Endothelial cell of umbilical vein (primary cell): ENCODE measurements at regions of chr9 and their contacts with region 1.

Region 1: DNA sequence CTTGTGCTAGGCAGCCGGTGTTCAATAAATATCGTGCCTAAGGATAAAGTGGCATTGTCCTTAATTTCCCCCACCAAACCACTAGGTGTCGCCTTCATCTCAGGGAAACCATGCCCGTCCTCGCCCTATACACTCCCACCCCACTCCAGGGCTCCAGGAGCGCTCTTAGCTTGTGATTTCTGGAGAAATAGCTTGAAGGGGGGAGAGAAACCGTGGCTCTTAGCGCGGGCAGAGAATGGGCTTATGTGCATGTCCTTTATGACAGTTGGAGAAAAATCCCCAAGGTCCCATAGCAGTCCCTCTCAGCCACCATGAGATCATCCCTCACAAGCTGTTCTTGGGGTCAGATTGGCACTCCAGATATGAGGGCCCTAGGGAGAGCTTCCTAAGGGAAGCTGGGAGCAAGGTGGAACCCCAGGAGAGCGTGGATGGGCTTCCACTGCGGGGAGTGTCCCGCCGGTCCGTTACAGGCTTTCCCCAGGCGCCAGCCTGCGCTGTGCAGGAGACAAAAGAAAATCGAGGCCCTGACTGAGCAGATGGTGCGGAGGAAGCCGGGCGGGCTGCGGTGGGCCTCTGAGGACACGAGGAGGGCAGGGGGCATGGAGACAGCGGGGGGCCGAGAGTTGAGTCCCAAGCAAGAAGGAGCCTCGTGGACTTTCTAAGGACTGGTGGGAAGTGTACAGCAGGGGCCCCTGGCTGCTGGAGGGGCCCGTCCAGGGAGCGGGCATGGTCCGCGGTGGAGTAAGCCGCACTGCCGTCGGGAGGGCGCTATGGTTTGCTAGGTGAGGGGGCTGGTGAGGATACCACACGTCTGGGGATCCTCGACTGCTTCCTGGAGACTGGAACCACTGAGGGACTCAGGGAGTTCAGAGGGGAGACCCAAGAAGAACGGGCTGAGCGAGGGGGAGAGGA is 750 bp upstream of the NPR2 start:
- DNase-seq: peak; percentile 78
- H3K4me3 ChIP-seq: peak overlapping the region in 1 of 3 experiments; percentile 11
- H3K27ac ChIP-seq: no peak overlapping the region
- H3K4me1 ChIP-seq: peaks cover 28% of the 10 kb centered on the region
- H3K27me3 ChIP-seq: no peaks in the 10 kb centered on the region
- CTCF ChIP-seq: peak; percentile 76 to 84
- POLR2A ChIP-seq: no peak

Region 2: DNA sequence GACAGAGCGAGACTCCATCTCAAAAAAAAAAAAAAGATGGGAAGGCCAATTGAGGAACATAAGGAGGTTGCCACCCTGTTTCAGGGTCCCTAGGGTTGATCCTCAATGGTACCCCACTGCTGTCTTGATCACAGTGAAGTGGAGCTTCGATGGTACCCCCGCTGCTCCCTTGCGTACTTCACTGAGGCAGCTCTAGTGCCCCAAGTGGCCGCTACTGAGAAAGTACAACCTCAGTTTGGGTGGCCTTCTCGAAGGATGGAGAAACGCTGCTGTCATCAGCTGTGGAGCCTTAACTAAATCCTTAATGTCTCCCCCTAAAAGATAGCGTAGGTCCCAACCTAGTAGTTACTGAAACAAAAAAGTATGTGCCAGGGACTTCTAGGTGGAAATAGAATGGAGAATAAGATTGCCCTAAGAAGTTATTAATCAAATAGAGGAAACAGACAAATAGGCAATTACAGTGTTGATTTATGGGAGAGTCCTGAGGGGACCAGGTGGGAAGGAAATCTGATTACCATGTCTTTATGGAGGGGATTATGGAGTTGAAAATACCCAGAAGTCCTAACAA is 179.3 kb before region 1 on chr9:
- CTCF ChIA-PET with region 1: no interaction called
- POLR2A ChIA-PET with region 1: no interaction called
- dilution Hi-C with region 1: no loop called
- intact Hi-C with region 1: no loop called
- DNase-seq: peak; percentile 37
- H3K4me3 ChIP-seq: no peak overlapping the region
- H3K27ac ChIP-seq: no peak overlapping the region
- H3K4me1 ChIP-seq: no peaks in the 10 kb centered on the region
- H3K27me3 ChIP-seq: peaks cover 17 to 21% of the 10 kb centered on the region in 2 experiments
- CTCF ChIP-seq: peak; percentile 67 to 80
- POLR2A ChIP-seq: no peak

Region 3: GRCh38 chr9:35738186-35738585 is 52.5 kb before region 1 on chr9:
- CTCF ChIA-PET with region 1: interaction called, 102 read pairs
- POLR2A ChIA-PET with region 1: interaction called, 3 read pairs
- dilution Hi-C with region 1: no loop called
- intact Hi-C with region 1: loop called (anchors 1 kb)
- DNase-seq: no peak
- H3K4me3 ChIP-seq: no peak overlapping the region
- H3K27ac ChIP-seq: no peak overlapping the region
- H3K4me1 ChIP-seq: peaks cover 12% of the 10 kb centered on the region
- H3K27me3 ChIP-seq: no peaks in the 10 kb centered on the region
- CTCF ChIP-seq: no peak
- POLR2A ChIP-seq: no peak

Region 4: GRCh38 chr9:35774907-35775635 is 15.6 kb before region 1 on chr9:
- CTCF ChIA-PET with region 1: interaction called, 25 read pairs
- POLR2A ChIA-PET with region 1: no interaction called
- dilution Hi-C with region 1: no loop called
- intact Hi-C with region 1: no loop called
- DNase-seq: peak; percentile 79
- H3K4me3 ChIP-seq: peak overlapping the region in 1 of 3 experiments; percentile 13
- H3K27ac ChIP-seq: peak overlapping the region; percentile 52
- H3K4me1 ChIP-seq: peaks cover 36% of the 10 kb centered on the region
- H3K27me3 ChIP-seq: no peaks in the 10 kb centered on the region
- CTCF ChIP-seq: no peak
- POLR2A ChIP-seq: no peak

Region 5: GRCh38 chr9:35829084-35829763 is 38.6 kb after region 1 on chr9 and contains the start of gene TMEM8B:
- CTCF ChIA-PET with region 1: interaction called, 277 read pairs
- POLR2A ChIA-PET with region 1: interaction called, 5 read pairs
- dilution Hi-C with region 1: no loop called
- intact Hi-C with region 1: loop called (anchors 1 kb)
- DNase-seq: peak; percentile 91
- H3K4me3 ChIP-seq: peak within 1 kb of the TSS; percentile 54 to 60 (median 60)
- H3K27ac ChIP-seq: peak within 1 kb of the TSS; percentile 34
- H3K4me1 ChIP-seq: peaks cover 9% of the 10 kb centered on the region
- H3K27me3 ChIP-seq: no peaks in the 10 kb centered on the region
- CTCF ChIP-seq: no peak
- POLR2A ChIP-seq: peak; percentile 57
- total RNA-seq, gene TMEM8B: 2.5 and 2.9 TPM in 2 replicates

Region 6: GRCh38 chr9:35882263-35882848 is 91.7 kb after region 1 on chr9:
- CTCF ChIA-PET with region 1: interaction called, 209 read pairs
- POLR2A ChIA-PET with region 1: interaction called, 3 read pairs
- dilution Hi-C with region 1: no loop called
- intact Hi-C with region 1: loop called (anchors 1 kb)
- DNase-seq: peak; percentile 75
- H3K4me3 ChIP-seq: no peak overlapping the region
- H3K27ac ChIP-seq: no peak overlapping the region
- H3K4me1 ChIP-seq: peaks cover 5% of the 10 kb centered on the region
- H3K27me3 ChIP-seq: peaks cover 4 to 17% of the 10 kb centered on the region in 2 experiments
- CTCF ChIP-seq: peak; percentile 91 to 96
- POLR2A ChIP-seq: no peak

Region 7: DNA sequence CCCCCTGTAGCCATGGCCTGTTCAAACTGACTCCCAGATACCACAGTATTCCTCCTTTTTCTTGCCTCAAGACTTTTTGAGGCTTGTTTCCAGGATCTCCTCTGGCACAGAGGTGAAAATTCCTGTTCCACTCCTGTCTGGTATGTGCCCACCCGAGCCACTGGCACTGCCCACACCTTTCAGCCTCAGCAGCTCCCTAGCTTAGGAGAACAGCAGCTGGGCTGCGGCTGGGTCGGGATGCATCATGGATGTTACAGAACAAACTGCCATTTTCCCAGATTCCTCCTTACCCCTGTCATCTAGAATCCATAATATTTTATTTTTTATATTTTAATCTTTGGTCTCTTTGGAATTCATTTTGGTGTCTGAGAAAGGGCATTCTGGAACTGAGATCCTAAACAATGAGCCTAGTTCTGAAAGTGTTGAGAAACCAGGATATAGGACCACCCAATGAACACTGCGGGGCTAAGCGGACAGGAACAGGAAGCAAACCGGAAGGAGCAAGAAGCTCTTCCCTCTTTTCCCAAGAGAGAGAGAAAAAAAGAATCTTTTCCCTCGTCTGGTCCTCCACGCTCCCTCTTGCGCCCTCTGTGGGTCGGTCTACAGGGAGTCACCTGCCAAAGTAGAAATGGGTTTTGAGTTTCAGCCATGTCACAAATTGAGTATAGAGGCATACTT is 154.8 kb after region 1 on chr9:
- CTCF ChIA-PET with region 1: interaction called, 15 read pairs
- POLR2A ChIA-PET with region 1: no interaction called
- dilution Hi-C with region 1: no loop called
- intact Hi-C with region 1: loop called (anchors 2 kb)
- DNase-seq: peak; percentile 67
- H3K4me3 ChIP-seq: peak overlapping the region in 1 of 3 experiments; percentile 33
- H3K27ac ChIP-seq: peak overlapping the region; percentile 16
- H3K4me1 ChIP-seq: peaks cover 22% of the 10 kb centered on the region
- H3K27me3 ChIP-seq: no peaks in the 10 kb centered on the region
- CTCF ChIP-seq: peak; percentile 83 to 85
- POLR2A ChIP-seq: no peak